PC-3 (cell line): ENCODE measurements at regions of chr3 and their contacts with region 1.

Region 1: GRCh38 chr3:191235331-191236314 is 36.6 kb downstream of the OSTN start:
- DNase-seq: peak; percentile 57
- ATAC-seq: no peak
- H3K4me3 ChIP-seq: no peak overlapping the region
- H3K27ac ChIP-seq: peak overlapping the region; percentile 94
- H3K4me1 ChIP-seq: peaks cover 57% of the 10 kb centered on the region
- H3K27me3 ChIP-seq: no peaks in the 10 kb centered on the region
- CTCF ChIP-seq: no peak

Region 2: GRCh38 chr3:190709351-190709773 is 526.3 kb before region 1 on chr3:
- CTCF ChIA-PET with region 1: no interaction called
- POLR2A ChIA-PET with region 1: no interaction called
- intact Hi-C with region 1: loop called (anchors 5 kb)
- DNase-seq: peak; percentile 79
- ATAC-seq: peak; percentile 98
- H3K4me3 ChIP-seq: no peak overlapping the region
- H3K27ac ChIP-seq: no peak overlapping the region
- H3K4me1 ChIP-seq: peaks cover 15% of the 10 kb centered on the region
- H3K27me3 ChIP-seq: no peaks in the 10 kb centered on the region
- CTCF ChIP-seq: no peak

Region 3: GRCh38 chr3:190883973-190884832 is 351.4 kb before region 1 on chr3:
- CTCF ChIA-PET with region 1: no interaction called
- POLR2A ChIA-PET with region 1: no interaction called
- intact Hi-C with region 1: loop called (anchors 5 kb)
- DNase-seq: peak; percentile 88
- ATAC-seq: peak; percentile 89
- H3K4me3 ChIP-seq: peak overlapping the region; percentile 35; the same call in 1 of the 2 replicates
- H3K27ac ChIP-seq: no peak overlapping the region
- H3K4me1 ChIP-seq: no peaks in the 10 kb centered on the region
- H3K27me3 ChIP-seq: no peaks in the 10 kb centered on the region
- CTCF ChIP-seq: peak; percentile 96

Region 4: GRCh38 chr3:191066669-191067068 is 169.0 kb before region 1 on chr3:
- CTCF ChIA-PET with region 1: no interaction called
- POLR2A ChIA-PET with region 1: no interaction called
- intact Hi-C with region 1: loop called (anchors 5 kb)
- DNase-seq: peak; percentile 92
- ATAC-seq: peak; percentile 67
- H3K4me3 ChIP-seq: peak overlapping the region; percentile 25; the same call in 1 of the 2 replicates
- H3K27ac ChIP-seq: peak overlapping the region; percentile 95
- H3K4me1 ChIP-seq: peaks cover 69% of the 10 kb centered on the region
- H3K27me3 ChIP-seq: no peaks in the 10 kb centered on the region
- CTCF ChIP-seq: no peak

Region 5: DNA sequence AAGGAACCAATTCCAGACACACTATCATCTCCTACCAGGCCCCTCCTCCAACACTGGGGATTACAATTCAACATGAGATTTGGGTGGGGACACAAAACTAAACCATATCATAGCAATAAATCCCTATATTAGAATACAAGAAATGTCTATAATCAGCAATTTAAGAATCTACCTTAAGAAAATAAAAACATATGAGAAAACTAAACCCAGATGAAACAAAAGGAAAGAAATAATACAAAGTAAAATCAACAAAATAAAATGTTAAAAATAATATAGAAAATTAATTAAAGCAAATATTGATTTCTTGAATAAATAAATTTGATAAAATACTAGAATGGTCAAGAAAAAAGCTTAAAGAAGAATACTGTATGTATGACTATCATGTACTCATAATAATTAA is 42.7 kb before region 1 on chr3:
- CTCF ChIA-PET with region 1: no interaction called
- POLR2A ChIA-PET with region 1: no interaction called
- intact Hi-C with region 1: no loop called
- DNase-seq: no peak
- ATAC-seq: no peak
- H3K4me3 ChIP-seq: no peak overlapping the region
- H3K27ac ChIP-seq: no peak overlapping the region
- H3K4me1 ChIP-seq: peaks cover 2% of the 10 kb centered on the region
- H3K27me3 ChIP-seq: no peaks in the 10 kb centered on the region
- CTCF ChIP-seq: no peak

Region 6: DNA sequence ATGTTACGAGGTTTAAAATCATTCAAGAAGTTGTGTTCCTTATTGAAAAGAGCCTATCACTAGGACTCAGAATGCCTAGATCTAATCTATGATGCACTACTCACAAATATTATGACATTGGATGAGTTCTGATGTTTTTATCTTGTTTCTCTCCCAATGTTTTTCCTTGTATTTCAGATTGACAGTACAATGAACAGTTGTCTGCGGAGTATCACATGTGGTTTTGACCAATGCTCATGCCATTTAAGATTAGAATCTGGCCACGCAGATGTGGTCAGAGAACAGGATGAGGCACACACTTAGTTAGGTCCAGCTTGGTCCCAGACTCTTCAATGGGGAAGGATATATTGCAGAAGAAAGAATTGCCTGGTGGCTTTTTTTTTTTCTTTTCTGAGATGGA is 68.0 kb after region 1 on chr3:
- CTCF ChIA-PET with region 1: no interaction called
- POLR2A ChIA-PET with region 1: no interaction called
- intact Hi-C with region 1: no loop called
- DNase-seq: no peak
- ATAC-seq: no peak
- H3K4me3 ChIP-seq: no peak overlapping the region
- H3K27ac ChIP-seq: no peak overlapping the region
- H3K4me1 ChIP-seq: no peaks in the 10 kb centered on the region
- H3K27me3 ChIP-seq: no peaks in the 10 kb centered on the region
- CTCF ChIP-seq: no peak